PC-9 (cell line): ENCODE measurements at regions of chr11 and their contacts with region 1.

Region 1: DNA sequence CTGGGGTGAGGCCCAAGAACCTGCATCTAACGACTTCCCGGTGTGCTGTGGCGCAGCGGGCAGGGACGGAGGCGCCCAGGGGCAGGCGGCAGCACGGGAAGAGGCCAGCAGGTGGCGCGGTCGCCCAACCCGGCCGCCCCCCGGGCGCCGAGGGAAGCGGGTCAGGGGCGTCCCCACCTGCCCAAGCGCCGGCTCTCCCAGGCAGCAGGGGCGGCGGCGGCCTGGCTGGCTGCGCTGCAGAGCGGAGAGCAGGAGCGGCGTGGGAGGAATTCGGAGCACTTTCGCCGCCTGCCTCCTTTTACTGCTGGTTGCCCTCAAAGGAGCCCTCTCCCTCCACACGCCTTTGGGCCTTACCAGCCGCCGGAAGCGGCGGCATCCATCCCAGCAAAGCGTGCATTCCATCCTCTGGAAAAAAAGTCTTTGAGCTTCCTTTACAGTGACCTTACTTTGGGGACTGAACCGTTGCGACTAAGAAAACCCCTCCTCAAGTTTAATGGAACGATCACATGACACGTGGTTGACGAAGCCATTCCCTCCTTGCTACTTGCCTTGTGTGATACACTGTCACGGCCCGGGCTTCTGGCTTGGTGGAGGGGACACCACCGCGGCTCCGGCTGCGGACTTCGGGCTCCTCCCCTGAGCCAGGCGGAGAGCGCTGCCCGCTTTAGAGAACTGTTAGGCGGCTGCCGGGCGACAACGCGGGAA is 106.8 kb upstream of the CLMP start:
- DNase-seq: peak in 1 of 2 experiments; percentile 58
- H3K4me3 ChIP-seq: peak overlapping the region; percentile 49
- H3K27ac ChIP-seq: no peak overlapping the region
- H3K4me1 ChIP-seq: peaks cover 23% of the 10 kb centered on the region
- H3K27me3 ChIP-seq: no peaks in the 10 kb centered on the region
- CTCF ChIP-seq: peak; percentile 78

Region 2: GRCh38 chr11:122888162-122888561 is 413.7 kb before region 1 on chr11:
- CTCF ChIA-PET with region 1: no interaction called
- POLR2A ChIA-PET with region 1: interaction called, 31 read pairs
- intact Hi-C with region 1: no loop called
- DNase-seq: no peak
- H3K4me3 ChIP-seq: no peak overlapping the region
- H3K27ac ChIP-seq: no peak overlapping the region
- H3K4me1 ChIP-seq: peaks cover 6% of the 10 kb centered on the region
- H3K27me3 ChIP-seq: no peaks in the 10 kb centered on the region
- CTCF ChIP-seq: no peak